ENCODE measurements at regions of chr13 and their contacts with region 1.

Region 1: DNA sequence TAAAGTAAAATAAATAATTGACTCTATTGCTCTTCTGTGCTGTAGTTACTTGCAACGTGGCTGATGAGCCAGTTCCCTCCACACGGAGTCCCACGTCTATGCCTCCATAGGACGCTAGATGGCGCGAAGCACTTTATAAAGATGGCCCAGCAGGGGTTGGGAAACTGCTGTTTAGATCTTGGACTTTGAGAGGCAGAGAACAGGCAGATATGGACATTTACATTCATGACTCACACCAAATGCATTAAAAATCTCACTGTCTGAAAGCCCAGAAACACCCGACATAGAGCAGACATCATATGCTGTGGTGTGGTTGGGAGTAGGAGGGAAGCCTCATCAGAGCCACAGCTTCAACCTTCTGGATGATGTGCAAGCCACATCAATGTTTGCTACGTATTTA is 643.1 kb upstream of the ARGLU1 start:
- DNase-seq: peak; percentile 72
- ATAC-seq: peak; percentile 72
- H3K4me3 Mint-ChIP-seq: no peak overlapping the region
- H3K27ac Mint-ChIP-seq: no peak overlapping the region
- H3K4me1 Mint-ChIP-seq: no peaks in the 10 kb centered on the region
- H3K27me3 Mint-ChIP-seq: no peaks in the 10 kb centered on the region
- CTCF ChIP-seq: peak; percentile 89

Region 2: GRCh38 chr13:107650081-107650701 is 439.1 kb after region 1 on chr13:
- CTCF ChIA-PET with region 1: interaction called, 12 read pairs
- POLR2A ChIA-PET with region 1: no interaction called
- intact Hi-C with region 1: loop called (anchors 5 kb)
- DNase-seq: peak; percentile 53
- ATAC-seq: no peak
- H3K4me3 Mint-ChIP-seq: no peak overlapping the region
- H3K27ac Mint-ChIP-seq: no peak overlapping the region
- H3K4me1 Mint-ChIP-seq: no peaks in the 10 kb centered on the region
- H3K27me3 Mint-ChIP-seq: no peaks in the 10 kb centered on the region
- CTCF ChIP-seq: peak; percentile 84

Region 3: DNA sequence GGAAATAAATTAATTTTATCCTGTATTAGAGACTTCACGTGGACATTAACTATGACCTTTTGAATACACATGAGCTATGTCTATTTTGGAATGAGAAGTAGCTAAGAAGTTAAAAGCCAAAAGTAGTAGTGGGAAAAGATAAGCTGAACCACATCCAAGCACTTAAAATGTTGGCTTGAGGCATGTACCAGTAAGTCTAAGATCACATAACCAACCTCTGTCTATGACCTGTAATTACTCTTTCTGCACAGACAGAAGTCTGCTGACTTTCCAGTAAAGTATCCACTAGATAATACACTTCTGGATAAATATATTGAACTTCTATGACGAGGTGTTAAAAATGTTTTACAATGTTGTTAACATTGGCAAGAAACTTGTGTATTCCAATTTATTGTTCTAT is 935.6 kb after region 1 on chr13:
- CTCF ChIA-PET with region 1: no interaction called
- POLR2A ChIA-PET with region 1: no interaction called
- intact Hi-C with region 1: loop called (anchors 5 kb)
- DNase-seq: no peak
- ATAC-seq: no peak
- H3K4me3 Mint-ChIP-seq: no peak overlapping the region
- H3K27ac Mint-ChIP-seq: no peak overlapping the region
- H3K4me1 Mint-ChIP-seq: no peaks in the 10 kb centered on the region
- H3K27me3 Mint-ChIP-seq: peaks cover 9% of the 10 kb centered on the region
- CTCF ChIP-seq: no peak

Region 4: GRCh38 chr13:108155185-108156106 is 944.4 kb after region 1 on chr13:
- CTCF ChIA-PET with region 1: interaction called, 15 read pairs
- POLR2A ChIA-PET with region 1: no interaction called
- intact Hi-C with region 1: no loop called
- DNase-seq: peak; percentile 74
- ATAC-seq: peak; percentile 45
- H3K4me3 Mint-ChIP-seq: no peak overlapping the region
- H3K27ac Mint-ChIP-seq: no peak overlapping the region
- H3K4me1 Mint-ChIP-seq: no peaks in the 10 kb centered on the region
- H3K27me3 Mint-ChIP-seq: peaks cover 8% of the 10 kb centered on the region
- CTCF ChIP-seq: peak; percentile 95